Naive thymus-derived CD4-positive, alpha-beta T cell (primary cell): ENCODE measurements at regions of chr13 and their contacts with region 1.

Region 1: DNA sequence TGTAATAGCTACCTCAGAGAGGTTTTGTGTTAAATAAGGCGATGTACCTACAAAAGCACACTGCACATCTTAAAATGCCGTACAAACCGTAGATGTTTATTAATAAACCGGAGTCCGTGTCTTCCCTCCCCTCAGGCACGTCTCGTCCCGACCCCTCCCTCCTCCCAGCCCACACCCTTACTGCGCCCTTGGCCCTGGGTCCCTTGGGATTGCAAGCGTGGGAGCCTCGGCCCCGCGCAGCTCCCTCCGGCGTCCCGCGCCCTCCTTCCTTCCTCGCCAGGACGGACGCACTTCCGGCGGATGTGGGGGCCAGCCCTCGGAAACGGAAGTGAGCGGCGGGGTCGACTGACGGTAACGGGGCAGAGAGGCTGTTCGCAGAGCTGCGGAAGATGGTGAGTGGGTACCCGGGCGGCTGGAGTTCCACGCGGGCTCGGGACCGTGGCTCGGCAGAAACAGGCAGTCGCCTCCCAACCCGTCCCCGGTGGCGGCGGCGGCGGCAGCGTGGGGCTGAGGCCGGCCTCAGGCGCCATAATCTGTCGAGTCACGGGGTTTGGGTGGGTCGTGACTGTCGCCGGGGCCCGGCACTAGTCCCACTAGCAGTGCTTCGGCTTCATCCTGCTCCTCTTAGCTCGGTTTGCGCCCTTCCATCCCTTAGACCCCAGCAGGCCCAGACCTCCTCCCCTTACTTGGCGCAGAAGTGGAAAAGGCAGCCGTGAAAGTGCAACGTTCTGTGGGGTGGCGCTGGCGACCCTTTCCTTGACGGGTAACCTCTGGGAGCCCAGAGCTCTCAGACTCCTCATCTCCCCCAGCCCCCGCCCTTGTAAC is at the start of gene POMP:
- DNase-seq: peak; percentile 83 to 96 (median 93)
- ATAC-seq: peak; percentile 95
- H3K4me3 ChIP-seq: peak within 1 kb of the TSS; percentile 86
- H3K4me3 Mint-ChIP-seq: peak within 1 kb of the TSS; percentile 88 to 100 (median 98)
- H3K27ac ChIP-seq: peak within 1 kb of the TSS; percentile 96
- H3K27ac Mint-ChIP-seq: peak within 1 kb of the TSS; percentile 94 to 99 (median 99)
- H3K4me1 ChIP-seq: peaks cover 25 to 29% of the 10 kb centered on the region in 2 donors
- H3K4me1 Mint-ChIP-seq: peaks cover 38 to 84% (median 69%) of the 10 kb centered on the region in 7 donors
- H3K27me3 ChIP-seq: no peaks in the 10 kb centered on the region
- H3K27me3 Mint-ChIP-seq: no peaks in the 10 kb centered on the region
- total RNA-seq, gene POMP: 18.8 to 97.0 (median 21.2) TPM

Region 2: DNA sequence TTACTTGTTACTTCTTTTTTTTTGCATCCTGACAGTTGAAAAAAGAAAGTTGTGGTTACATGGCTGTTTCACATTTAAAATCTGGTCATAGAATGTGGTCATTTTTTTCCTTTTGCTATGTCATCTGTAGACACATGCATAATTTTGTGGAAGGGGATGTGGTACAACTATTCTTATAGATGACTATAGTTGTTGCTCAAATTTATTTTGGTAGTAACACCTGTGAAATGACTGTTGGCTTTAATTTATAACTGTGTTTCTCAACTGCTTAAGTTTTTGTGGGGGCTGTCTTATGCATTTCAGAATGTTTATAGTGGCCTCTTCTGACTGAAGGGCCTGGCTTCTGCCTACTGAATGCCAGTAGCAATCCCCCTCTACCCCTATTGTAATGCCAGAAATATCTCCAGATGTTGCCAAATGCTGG is 390.2 kb before region 1 on chr13:
- CTCF ChIA-PET with region 1: no interaction called
- POLR2A ChIA-PET with region 1: no interaction called
- intact Hi-C with region 1: loop called in 1 of 2 experiments (anchors 2 kb)
- DNase-seq: no peak
- ATAC-seq: peak; percentile 67
- H3K4me3 ChIP-seq: no peak overlapping the region
- H3K4me3 Mint-ChIP-seq: peak overlapping the region in 1 of 10 donors; percentile 51
- H3K27ac ChIP-seq: no peak overlapping the region
- H3K27ac Mint-ChIP-seq: peak overlapping the region in 4 of 9 donors; percentile 21 to 59 (median 40)
- H3K4me1 ChIP-seq: no peaks in the 10 kb centered on the region
- H3K4me1 Mint-ChIP-seq: peaks cover 0 to 17% (median 6%) of the 10 kb centered on the region in 7 donors
- H3K27me3 ChIP-seq: no peaks in the 10 kb centered on the region
- H3K27me3 Mint-ChIP-seq: no peaks in the 10 kb centered on the region

Region 3: GRCh38 chr13:28611654-28612131 is 47.3 kb before region 1 on chr13:
- CTCF ChIA-PET with region 1: no interaction called
- POLR2A ChIA-PET with region 1: no interaction called
- intact Hi-C with region 1: loop called in 1 of 2 experiments (anchors 1 kb)
- DNase-seq: peak in 6 of 9 donors; percentile 13 to 47 (median 34)
- ATAC-seq: peak; percentile 78
- H3K4me3 ChIP-seq: no peak overlapping the region
- H3K4me3 Mint-ChIP-seq: peak overlapping the region in 5 of 10 donors; percentile 3 to 58 (median 27)
- H3K27ac ChIP-seq: no peak overlapping the region
- H3K27ac Mint-ChIP-seq: peak overlapping the region in 4 of 9 donors; percentile 30 to 72 (median 49)
- H3K4me1 ChIP-seq: peaks cover 0 to 8% of the 10 kb centered on the region in 2 donors
- H3K4me1 Mint-ChIP-seq: peaks cover 13 to 23% (median 19%) of the 10 kb centered on the region in 7 donors
- H3K27me3 ChIP-seq: no peaks in the 10 kb centered on the region
- H3K27me3 Mint-ChIP-seq: no peaks in the 10 kb centered on the region

Region 4: GRCh38 chr13:28953714-28954418 is 294.9 kb after region 1 on chr13:
- CTCF ChIA-PET with region 1: no interaction called
- POLR2A ChIA-PET with region 1: no interaction called
- intact Hi-C with region 1: no loop called
- DNase-seq: no peak
- ATAC-seq: no peak
- H3K4me3 ChIP-seq: no peak overlapping the region
- H3K4me3 Mint-ChIP-seq: no peak overlapping the region
- H3K27ac ChIP-seq: no peak overlapping the region
- H3K27ac Mint-ChIP-seq: no peak overlapping the region
- H3K4me1 ChIP-seq: no peaks in the 10 kb centered on the region
- H3K4me1 Mint-ChIP-seq: no peaks in the 10 kb centered on the region
- H3K27me3 ChIP-seq: no peaks in the 10 kb centered on the region
- H3K27me3 Mint-ChIP-seq: peaks cover 0 to 14% (median 3%) of the 10 kb centered on the region in 5 donors

Region 5: DNA sequence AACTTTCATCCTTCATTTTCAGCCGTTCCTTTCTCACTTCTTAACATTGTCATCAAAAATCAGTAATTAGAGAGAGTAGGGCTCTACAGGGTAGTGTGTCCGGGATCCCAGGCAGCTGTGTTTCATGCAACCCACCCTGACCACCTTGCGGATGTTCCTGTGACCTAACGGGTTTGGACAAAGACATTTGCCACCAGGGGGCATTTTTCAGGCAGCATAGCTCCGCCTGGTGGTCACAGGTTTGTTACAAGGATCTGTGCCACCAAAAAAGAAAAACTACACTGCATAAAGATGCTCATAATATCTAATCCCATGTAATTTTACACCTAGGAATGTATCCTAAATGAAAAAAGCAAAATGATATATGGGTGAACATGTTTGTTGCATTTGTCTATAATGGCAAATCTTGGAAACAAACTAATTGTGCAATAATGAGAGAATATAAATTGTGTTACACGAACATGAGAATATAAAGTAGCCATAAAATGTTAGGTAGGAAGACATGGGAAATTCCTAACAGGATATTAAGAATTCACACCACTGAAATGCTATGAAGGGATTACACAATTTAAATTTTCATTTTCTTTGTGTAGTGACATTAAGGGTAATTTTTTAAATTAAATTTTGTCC is 813.4 kb after region 1 on chr13:
- CTCF ChIA-PET with region 1: no interaction called
- POLR2A ChIA-PET with region 1: no interaction called
- intact Hi-C with region 1: no loop called
- DNase-seq: peak in 5 of 9 donors; percentile 10 to 46 (median 17)
- ATAC-seq: peak; percentile 69
- H3K4me3 ChIP-seq: no peak overlapping the region
- H3K4me3 Mint-ChIP-seq: no peak overlapping the region
- H3K27ac ChIP-seq: no peak overlapping the region
- H3K27ac Mint-ChIP-seq: no peak overlapping the region
- H3K4me1 ChIP-seq: no peaks in the 10 kb centered on the region
- H3K4me1 Mint-ChIP-seq: peaks cover 0 to 2% (median 0%) of the 10 kb centered on the region in 7 donors
- H3K27me3 ChIP-seq: no peaks in the 10 kb centered on the region
- H3K27me3 Mint-ChIP-seq: peaks cover 3 to 12% (median 5%) of the 10 kb centered on the region in 5 donors

Region 6: GRCh38 chr13:29595380-29596063 is 936.5 kb after region 1 on chr13 and contains the start of gene SLC7A1:
- CTCF ChIA-PET with region 1: no interaction called
- POLR2A ChIA-PET with region 1: no interaction called
- intact Hi-C with region 1: loop called in 1 of 2 experiments (anchors 10 kb)
- DNase-seq: peak; percentile 74 to 93 (median 85)
- ATAC-seq: peak; percentile 95
- H3K4me3 ChIP-seq: peak within 1 kb of the TSS; percentile 73
- H3K4me3 Mint-ChIP-seq: peak within 1 kb of the TSS; percentile 88 to 94 (median 90)
- H3K27ac ChIP-seq: peak within 1 kb of the TSS; percentile 82
- H3K27ac Mint-ChIP-seq: peak within 1 kb of the TSS; percentile 74 to 96 (median 87)
- H3K4me1 ChIP-seq: peaks cover 6 to 7% of the 10 kb centered on the region in 2 donors
- H3K4me1 Mint-ChIP-seq: peaks cover 26 to 49% (median 43%) of the 10 kb centered on the region in 7 donors
- H3K27me3 ChIP-seq: no peaks in the 10 kb centered on the region
- H3K27me3 Mint-ChIP-seq: peaks cover 0 to 3% (median 2%) of the 10 kb centered on the region in 5 donors
- total RNA-seq, gene SLC7A1: 12.2 to 63.8 (median 28.2) TPM